Psoas muscle (tissue), 8 donors: ENCODE measurements at regions of chr6 and their contacts with region 1.

Region 1: DNA sequence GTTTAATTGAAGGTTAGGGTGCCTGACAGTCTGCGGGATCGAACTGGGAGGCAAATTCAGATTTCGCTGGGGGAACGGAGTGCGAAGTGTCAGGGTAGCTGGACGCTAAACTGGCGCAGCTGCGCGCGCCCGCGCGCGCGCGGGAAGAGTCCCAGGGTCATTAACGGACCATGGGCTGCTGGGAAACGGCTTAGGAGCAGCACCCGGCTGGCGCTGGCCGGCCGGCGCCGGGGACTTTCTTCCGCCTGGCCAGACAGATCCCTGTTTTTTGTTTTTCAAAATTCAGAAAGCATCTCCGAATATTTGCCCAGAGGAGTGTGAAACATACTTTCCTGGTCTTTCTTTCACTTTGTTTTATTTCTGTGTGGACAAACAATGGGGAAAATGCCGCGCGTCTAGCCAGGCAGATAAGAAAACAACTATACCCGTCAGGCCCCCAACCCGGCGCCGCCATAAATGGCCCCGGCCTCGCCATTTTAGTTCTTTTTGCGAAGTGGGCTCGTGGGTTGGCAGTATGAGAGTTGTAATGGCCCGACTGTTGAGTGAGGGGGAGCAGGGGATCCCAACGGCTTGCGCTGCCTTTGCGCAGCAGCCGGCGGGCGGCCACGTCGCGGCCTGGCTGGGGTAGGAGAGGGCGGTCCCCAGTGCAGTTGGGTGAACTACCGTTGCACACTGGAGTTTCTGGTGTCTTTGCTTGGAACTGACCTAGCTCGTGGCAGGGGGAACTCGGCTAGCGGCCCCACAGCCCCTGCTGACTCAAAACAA is 7.1 kb downstream of the HSPA1B start:
- DNase-seq: peak; percentile 89 to 94
- ATAC-seq: peak; percentile 85 to 89 (median 86)
- H3K4me3 ChIP-seq: peak overlapping the region; percentile 86
- H3K27ac ChIP-seq: peak overlapping the region; percentile 90
- H3K4me1 ChIP-seq: peaks cover 46% of the 10 kb centered on the region
- H3K27me3 ChIP-seq: no peaks in the 10 kb centered on the region
- CTCF ChIP-seq: no peak

Region 2: DNA sequence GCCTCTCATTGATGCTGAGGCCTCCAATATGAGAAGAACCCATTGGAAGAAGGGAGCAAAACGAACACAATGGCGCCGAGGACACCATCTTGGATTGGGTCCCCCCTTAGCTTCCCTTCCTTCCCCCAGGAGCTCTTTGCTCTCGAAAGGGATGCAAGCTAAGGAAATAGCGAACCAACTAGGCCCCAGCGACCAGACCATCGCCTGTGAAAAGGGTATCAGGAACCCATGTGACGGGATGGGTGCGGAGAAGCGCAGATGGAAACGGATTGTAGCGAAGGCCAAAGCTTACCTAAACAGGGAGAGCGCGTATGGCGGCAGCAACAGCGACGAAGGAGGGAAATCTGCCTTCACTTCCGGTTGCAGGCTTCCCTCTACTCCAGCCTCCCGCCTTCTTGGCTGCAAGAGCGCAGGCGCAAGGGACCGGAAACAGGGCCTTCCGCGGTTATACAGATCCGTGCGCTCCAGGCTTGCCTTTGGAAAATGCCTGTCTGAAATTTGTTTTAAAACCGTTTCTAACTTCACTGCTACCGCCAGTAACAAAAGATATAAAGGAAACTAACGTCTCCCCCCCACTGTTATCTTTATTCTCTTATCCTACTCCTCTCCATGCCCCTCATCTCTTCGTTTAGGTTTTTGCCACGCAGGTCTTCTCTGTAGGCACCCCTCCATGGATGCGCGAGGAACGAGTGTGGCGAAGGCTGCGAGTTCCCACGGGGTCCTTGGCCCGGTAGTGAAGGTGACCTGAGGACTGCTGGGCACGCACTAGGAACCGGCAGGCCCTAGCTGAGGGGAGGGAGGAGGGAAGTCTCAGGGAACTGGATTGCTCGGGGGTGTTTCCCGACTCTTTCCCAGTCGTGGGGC is 292.7 kb before region 1 on chr6 and contains the start of gene DDX39B:
- intact Hi-C with region 1: loop called in 1 of 2 experiments (anchors 10 kb)
- DNase-seq: peak; percentile 96 to 98
- ATAC-seq: peak; percentile 93 to 94 (median 94)
- H3K4me3 ChIP-seq: peak within 1 kb of the TSS; percentile 88
- H3K27ac ChIP-seq: peak within 1 kb of the TSS; percentile 92
- H3K4me1 ChIP-seq: peaks cover 29% of the 10 kb centered on the region
- H3K27me3 ChIP-seq: no peaks in the 10 kb centered on the region
- CTCF ChIP-seq: no peak
- total RNA-seq, gene DDX39B: 141 to 186 (median 165) TPM

Region 3: GRCh38 chr6:31680840-31681671 is 153.6 kb before region 1 on chr6 and contains the start of gene LY6G5C:
- intact Hi-C with region 1: loop called in 1 of 2 experiments (anchors 5 kb)
- DNase-seq: peak; percentile 82 to 91
- ATAC-seq: peak; percentile 90 to 96 (median 94)
- H3K4me3 ChIP-seq: peak within 1 kb of the TSS; percentile 70
- H3K27ac ChIP-seq: peak within 1 kb of the TSS; percentile 13
- H3K4me1 ChIP-seq: peaks cover 8% of the 10 kb centered on the region
- H3K27me3 ChIP-seq: no peaks in the 10 kb centered on the region
- CTCF ChIP-seq: peak; percentile 71
- total RNA-seq, gene LY6G5C: 0.75 to 3.2 (median 2.3) TPM

Region 4: GRCh38 chr6:31769684-31770371 is 64.8 kb before region 1 on chr6:
- intact Hi-C with region 1: loop called in 1 of 2 experiments (anchors 5 kb)
- DNase-seq: peak; percentile 73 to 88
- ATAC-seq: peak; percentile 82 to 85 (median 84)
- H3K4me3 ChIP-seq: no peak overlapping the region
- H3K27ac ChIP-seq: no peak overlapping the region
- H3K4me1 ChIP-seq: no peaks in the 10 kb centered on the region
- H3K27me3 ChIP-seq: no peaks in the 10 kb centered on the region
- CTCF ChIP-seq: peak; percentile 87

Region 5: GRCh38 chr6:31795616-31796298 is 38.9 kb before region 1 on chr6 and contains the start of gene VARS1:
- intact Hi-C with region 1: loop called in 1 of 2 experiments (anchors 5 kb)
- DNase-seq: peak; percentile 93 to 96
- ATAC-seq: peak; percentile 90 to 93 (median 92)
- H3K4me3 ChIP-seq: peak within 1 kb of the TSS; percentile 81
- H3K27ac ChIP-seq: peak within 1 kb of the TSS; percentile 94
- H3K4me1 ChIP-seq: peaks cover 24% of the 10 kb centered on the region
- H3K27me3 ChIP-seq: no peaks in the 10 kb centered on the region
- CTCF ChIP-seq: peak; percentile 80
- total RNA-seq, gene VARS1: 53.2 to 108 (median 76.1) TPM

Region 6: DNA sequence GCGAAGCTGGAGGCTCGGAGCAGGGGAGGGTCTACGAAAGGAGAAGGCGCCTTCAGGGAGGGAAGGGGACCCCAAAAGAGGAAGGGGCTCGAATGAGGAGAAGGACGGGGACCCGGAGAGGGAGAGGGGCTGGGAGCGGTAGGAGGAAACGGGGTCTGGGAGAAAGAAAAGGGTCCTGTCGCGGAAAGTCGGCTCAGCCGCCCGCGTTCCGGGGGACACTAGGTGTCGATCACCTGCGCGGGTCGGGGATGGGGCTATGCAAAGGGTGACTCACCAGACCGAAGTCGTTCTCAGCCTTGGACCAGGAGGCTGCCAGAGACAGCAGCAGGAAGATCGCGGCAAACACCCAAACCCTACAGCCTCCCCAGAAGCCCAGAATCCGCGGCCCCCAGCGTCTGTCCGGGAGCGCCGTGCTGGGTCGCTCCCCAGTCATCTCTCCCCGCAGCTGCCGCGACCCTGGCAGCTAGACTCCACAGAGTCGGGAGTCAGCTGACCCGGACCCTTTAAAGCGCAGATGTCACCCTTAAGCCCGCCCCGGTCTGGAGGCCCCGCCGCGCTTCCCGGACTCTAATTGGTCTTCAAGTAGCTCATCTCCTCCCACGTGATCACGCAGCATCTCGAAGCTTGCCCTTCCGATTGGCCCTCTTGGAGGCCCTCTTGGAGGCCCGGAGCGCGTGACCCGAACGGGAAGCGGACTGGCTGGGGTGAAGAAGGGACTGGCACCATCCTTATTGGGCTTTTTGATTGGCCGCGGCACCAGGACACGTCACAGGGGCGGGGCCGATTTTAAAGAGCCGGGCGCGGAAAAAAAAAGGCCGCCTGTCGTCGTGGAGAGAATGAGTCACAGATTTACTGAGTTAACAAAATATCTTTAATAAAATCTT is 28.0 kb after region 1 on chr6 and contains the start of gene NEU1:
- intact Hi-C with region 1: loop called (anchors 2 kb)
- DNase-seq: peak; percentile 100
- ATAC-seq: peak; percentile 97 to 98 (median 98)
- H3K4me3 ChIP-seq: peak within 1 kb of the TSS; percentile 89
- H3K27ac ChIP-seq: peak within 1 kb of the TSS; percentile 91
- H3K4me1 ChIP-seq: peaks cover 9% of the 10 kb centered on the region
- H3K27me3 ChIP-seq: no peaks in the 10 kb centered on the region
- CTCF ChIP-seq: no peak
- total RNA-seq, gene NEU1: 14.2 to 20.6 (median 18.6) TPM

Region 7: DNA sequence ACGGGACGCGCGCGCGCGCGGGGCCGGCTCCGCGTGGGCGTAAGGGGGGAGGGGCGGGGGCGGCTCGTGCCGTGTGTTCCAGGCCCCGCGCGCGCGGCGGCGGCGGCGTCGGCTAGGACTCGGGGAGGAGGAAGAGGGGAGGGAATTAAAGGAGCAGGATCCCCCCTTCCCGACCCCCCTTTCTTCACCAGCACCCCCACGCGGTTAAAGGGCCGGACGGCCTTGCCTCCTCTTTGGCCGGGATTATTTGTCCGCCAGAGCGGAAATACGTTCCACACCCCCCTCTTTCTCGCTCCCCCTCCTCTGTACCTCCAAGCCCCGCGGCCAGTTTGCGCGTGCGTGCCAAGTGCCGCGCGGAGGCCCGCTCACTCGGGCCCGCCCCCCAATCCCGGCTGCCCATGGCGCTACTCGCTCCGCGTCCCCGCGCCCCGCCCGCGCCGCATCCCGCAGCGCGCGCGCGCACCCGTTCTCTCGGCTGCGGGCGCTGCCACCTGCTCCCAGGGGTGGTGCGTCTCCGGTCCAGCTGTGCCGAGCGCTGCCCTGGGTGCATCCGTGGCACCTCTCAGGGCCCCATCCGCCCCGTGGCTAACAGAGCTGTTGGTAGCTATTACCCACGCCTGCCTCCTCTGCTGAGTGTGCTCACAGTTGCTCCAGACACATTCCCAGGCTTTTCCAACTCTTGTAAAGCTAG is 67.5 kb after region 1 on chr6 and contains the start of gene ZBTB12:
- intact Hi-C with region 1: loop called in 1 of 2 experiments (anchors 2 kb)
- DNase-seq: peak; percentile 91 to 93
- ATAC-seq: peak; percentile 75 to 81 (median 78)
- H3K4me3 ChIP-seq: peak within 1 kb of the TSS; percentile 75
- H3K27ac ChIP-seq: peak within 1 kb of the TSS; percentile 75
- H3K4me1 ChIP-seq: peaks cover 19% of the 10 kb centered on the region
- H3K27me3 ChIP-seq: no peaks in the 10 kb centered on the region
- CTCF ChIP-seq: no peak
- total RNA-seq, gene ZBTB12: 1.1 to 2.6 (median 1.8) TPM